ENCODE measurements at regions of chr10 and their contacts with region 1.

Region 1: DNA sequence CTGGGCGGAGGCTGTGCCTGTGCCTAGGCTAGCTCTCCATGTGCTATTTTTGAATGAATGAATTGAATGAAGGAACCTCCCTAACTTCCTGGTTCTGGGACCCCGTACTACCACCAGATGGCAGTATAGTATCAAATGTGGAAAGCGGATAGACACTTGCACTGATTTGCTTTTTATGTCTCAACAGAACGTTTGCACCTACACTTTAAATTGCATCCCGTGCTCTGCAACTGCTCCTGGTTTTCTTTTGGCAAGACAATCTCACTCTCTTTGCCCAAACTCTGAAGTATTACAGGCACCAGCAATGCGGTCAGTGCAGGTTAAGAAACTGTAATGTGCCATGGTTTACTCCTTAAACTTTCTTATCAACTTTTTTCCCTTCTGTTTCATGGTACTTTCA is 6.5 kb downstream of the FZD8 start:
- DNase-seq: peak; percentile 63
- H3K4me3 ChIP-seq: no peak overlapping the region
- H3K27ac ChIP-seq: no peak overlapping the region
- H3K4me1 ChIP-seq: peaks cover 35% of the 10 kb centered on the region
- H3K27me3 ChIP-seq: no peaks in the 10 kb centered on the region
- CTCF ChIP-seq: peak; percentile 92 to 93

Region 2: DNA sequence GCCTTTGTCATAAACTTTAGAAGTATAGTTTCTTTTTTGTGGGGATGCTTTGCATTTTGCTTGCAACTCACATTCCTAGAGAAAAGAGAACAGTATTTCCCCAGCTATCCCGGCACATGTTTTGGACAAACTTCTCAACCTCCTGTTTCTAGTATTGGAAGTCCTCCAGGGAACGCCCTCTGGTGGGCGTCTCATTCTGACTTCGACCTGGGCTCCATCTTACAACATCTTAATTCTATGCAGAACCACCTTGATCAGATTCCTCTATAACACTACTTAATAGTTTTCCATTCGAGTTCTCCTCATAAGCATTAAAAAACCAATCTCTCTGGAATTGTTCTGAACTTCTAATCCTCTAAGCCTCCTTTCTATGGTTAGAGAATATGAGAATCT is 146.1 kb after region 1 on chr10:
- CTCF ChIA-PET with region 1: no interaction called
- dilution Hi-C with region 1: no loop called
- in situ Hi-C with region 1: no loop called
- intact Hi-C with region 1: loop called (anchors 1 kb)
- DNase-seq: no peak
- H3K4me3 ChIP-seq: no peak overlapping the region
- H3K27ac ChIP-seq: no peak overlapping the region
- H3K4me1 ChIP-seq: peaks cover 27% of the 10 kb centered on the region
- H3K27me3 ChIP-seq: no peaks in the 10 kb centered on the region
- CTCF ChIP-seq: peak in 1 of 2 donors; percentile 1

Region 3: GRCh38 chr10:36271627-36272340 is 636.2 kb after region 1 on chr10:
- CTCF ChIA-PET with region 1: no interaction called
- dilution Hi-C with region 1: no loop called
- in situ Hi-C with region 1: no loop called
- intact Hi-C with region 1: loop called (anchors 5 kb)
- DNase-seq: peak; percentile 90
- H3K4me3 ChIP-seq: no peak overlapping the region
- H3K27ac ChIP-seq: peak overlapping the region; percentile 90
- H3K4me1 ChIP-seq: peaks cover 18% of the 10 kb centered on the region
- H3K27me3 ChIP-seq: no peaks in the 10 kb centered on the region
- CTCF ChIP-seq: no peak

Region 4: GRCh38 chr10:36504758-36505157 is 869.2 kb after region 1 on chr10:
- CTCF ChIA-PET with region 1: no interaction called
- dilution Hi-C with region 1: no loop called
- in situ Hi-C with region 1: no loop called
- intact Hi-C with region 1: loop called (anchors 2 kb)
- DNase-seq: peak; percentile 28
- H3K4me3 ChIP-seq: no peak overlapping the region
- H3K27ac ChIP-seq: no peak overlapping the region
- H3K4me1 ChIP-seq: no peaks in the 10 kb centered on the region
- H3K27me3 ChIP-seq: no peaks in the 10 kb centered on the region
- CTCF ChIP-seq: peak; percentile 0 to 28

Region 5: GRCh38 chr10:36880898-36881297 is 1245.3 kb after region 1 on chr10:
- CTCF ChIA-PET with region 1: no interaction called
- dilution Hi-C with region 1: no loop called
- in situ Hi-C with region 1: loop called in 1 of 2 experiments (anchors 10 kb)
- intact Hi-C with region 1: loop called (anchors 1 kb)
- DNase-seq: peak; percentile 15
- H3K4me3 ChIP-seq: no peak overlapping the region
- H3K27ac ChIP-seq: no peak overlapping the region
- H3K4me1 ChIP-seq: no peaks in the 10 kb centered on the region
- H3K27me3 ChIP-seq: no peaks in the 10 kb centered on the region
- CTCF ChIP-seq: peak; percentile 50 to 69